PC-9 (cell line): ENCODE measurements at regions of chr13 and their contacts with region 1.

Region 1: DNA sequence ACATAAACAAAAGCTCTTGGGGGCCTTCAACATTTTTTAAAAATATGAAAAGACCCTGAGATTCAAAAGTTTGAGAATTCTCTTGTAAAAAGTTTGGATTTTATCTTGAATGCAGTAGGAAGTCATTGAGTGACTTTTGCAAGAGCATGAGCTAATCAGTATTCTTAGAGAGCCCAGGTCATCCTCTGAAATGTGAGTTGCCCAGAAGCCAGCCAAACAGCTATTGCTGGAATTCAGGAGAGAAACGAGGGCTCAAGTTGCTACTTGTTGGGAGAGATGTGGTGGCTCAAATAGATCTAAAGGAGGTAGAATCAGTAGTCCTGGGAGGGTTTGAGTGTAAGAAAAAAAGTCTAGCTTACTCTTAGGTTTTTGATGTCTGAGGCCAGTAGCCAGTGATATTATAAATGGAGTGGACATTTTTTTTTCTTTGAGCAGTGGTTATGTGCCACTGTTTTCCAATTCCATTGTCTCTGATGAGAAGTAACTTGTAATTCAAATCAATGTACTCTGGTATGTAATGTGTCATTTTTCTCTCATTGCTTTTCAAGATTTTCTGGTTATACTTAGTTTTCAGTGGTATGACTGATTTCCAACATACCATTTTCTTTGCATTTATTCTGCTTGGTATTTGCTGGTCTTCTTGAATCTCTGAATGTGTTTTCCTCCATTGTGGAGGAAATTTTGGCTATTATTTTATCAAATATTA is 30.7 kb downstream of the LMO7 start:
- DNase-seq: no peak
- H3K4me3 ChIP-seq: no peak overlapping the region
- H3K27ac ChIP-seq: no peak overlapping the region
- H3K4me1 ChIP-seq: no peaks in the 10 kb centered on the region
- H3K27me3 ChIP-seq: no peaks in the 10 kb centered on the region
- CTCF ChIP-seq: no peak

Region 2: GRCh38 chr13:75341028-75341427 is 325.8 kb before region 1 on chr13:
- CTCF ChIA-PET with region 1: no interaction called
- POLR2A ChIA-PET with region 1: no interaction called
- intact Hi-C with region 1: no loop called
- DNase-seq: no peak
- H3K4me3 ChIP-seq: no peak overlapping the region
- H3K27ac ChIP-seq: no peak overlapping the region
- H3K4me1 ChIP-seq: no peaks in the 10 kb centered on the region
- H3K27me3 ChIP-seq: no peaks in the 10 kb centered on the region
- CTCF ChIP-seq: no peak

Region 3: GRCh38 chr13:75566658-75567057 is 100.1 kb before region 1 on chr13:
- CTCF ChIA-PET with region 1: no interaction called
- POLR2A ChIA-PET with region 1: no interaction called
- intact Hi-C with region 1: loop called (anchors 10 kb)
- DNase-seq: peak in 1 of 2 experiments; percentile 62
- H3K4me3 ChIP-seq: no peak overlapping the region
- H3K27ac ChIP-seq: 0 out of 2 replicates have a peak overlapping the region, but pooled peaks have one; percentile 31
- H3K4me1 ChIP-seq: no peaks in the 10 kb centered on the region
- H3K27me3 ChIP-seq: no peaks in the 10 kb centered on the region
- CTCF ChIP-seq: peak; percentile 60